IMR-90 (cell line): ENCODE measurements at regions of chr1 and their contacts with region 1.

Region 1: DNA sequence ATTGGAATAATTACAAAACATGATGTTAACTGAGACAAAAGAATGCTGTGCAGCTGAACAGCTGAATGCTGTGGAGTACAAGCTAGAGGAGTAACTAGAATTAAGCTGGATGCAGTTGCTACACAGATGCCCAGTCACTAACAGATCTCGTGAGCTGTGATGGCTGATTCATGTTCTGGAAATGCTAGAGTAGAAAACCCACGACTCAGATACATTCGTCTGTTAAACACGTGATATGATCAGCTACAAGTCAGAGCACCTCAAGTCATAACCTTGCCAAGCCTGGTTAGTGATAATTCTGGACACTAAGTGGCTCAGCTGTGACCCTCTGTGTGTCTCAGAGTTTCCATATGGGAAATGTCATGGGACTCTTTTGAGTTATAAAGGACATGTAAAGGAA is 89.7 kb upstream of the ESRRG start:
- DNase-seq: peak; percentile 88
- ATAC-seq: peak; percentile 83
- H3K4me3 ChIP-seq: no peak overlapping the region
- H3K27ac ChIP-seq: no peak overlapping the region
- H3K4me1 ChIP-seq: peaks cover 11% of the 10 kb centered on the region
- H3K27me3 ChIP-seq: no peaks in the 10 kb centered on the region
- CTCF ChIP-seq: no peak
- POLR2A ChIP-seq: no peak
- RAD21 ChIP-seq: no peak

Region 2: DNA sequence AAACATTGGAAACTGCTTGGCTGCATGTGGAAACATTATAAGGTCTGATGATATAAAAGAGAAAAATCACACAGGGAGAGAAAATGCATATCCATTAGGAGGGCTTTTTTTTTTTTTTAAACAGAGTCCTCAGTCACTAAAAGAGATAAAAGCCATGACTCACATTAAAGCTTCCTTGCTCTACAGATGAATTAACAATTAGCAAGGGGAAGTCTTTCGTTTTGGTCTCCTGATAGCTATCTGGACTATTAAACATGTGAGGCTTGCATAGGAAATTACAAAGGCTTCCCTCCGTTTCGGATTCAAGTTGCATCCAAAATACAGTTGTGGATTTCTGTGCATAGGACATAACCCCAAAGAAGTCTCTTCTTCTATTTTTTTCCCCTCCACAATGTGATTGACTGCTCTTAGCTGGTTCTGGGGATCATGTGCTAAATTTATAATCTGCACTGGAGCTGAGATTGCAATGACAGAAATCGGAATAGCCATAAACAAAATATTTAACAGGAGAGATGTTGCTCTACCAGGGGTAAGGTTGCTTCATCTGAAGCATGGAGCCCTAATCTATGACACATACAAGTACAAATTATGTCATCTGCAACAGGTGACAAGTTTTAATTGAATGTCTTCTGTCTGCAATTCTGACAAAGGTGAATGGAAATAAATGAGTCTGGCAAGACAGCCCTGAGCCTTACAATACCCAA is 236.6 kb before region 1 on chr1:
- CTCF ChIA-PET with region 1: no interaction called
- POLR2A ChIA-PET with region 1: no interaction called
- dilution Hi-C with region 1: no loop called
- in situ Hi-C with region 1: no loop called
- intact Hi-C with region 1: no loop called
- DNase-seq: peak; percentile 2
- ATAC-seq: no peak
- H3K4me3 ChIP-seq: no peak overlapping the region
- H3K27ac ChIP-seq: no peak overlapping the region
- H3K4me1 ChIP-seq: no peaks in the 10 kb centered on the region
- H3K27me3 ChIP-seq: no peaks in the 10 kb centered on the region
- CTCF ChIP-seq: no peak
- POLR2A ChIP-seq: no peak
- RAD21 ChIP-seq: no peak

Region 3: DNA sequence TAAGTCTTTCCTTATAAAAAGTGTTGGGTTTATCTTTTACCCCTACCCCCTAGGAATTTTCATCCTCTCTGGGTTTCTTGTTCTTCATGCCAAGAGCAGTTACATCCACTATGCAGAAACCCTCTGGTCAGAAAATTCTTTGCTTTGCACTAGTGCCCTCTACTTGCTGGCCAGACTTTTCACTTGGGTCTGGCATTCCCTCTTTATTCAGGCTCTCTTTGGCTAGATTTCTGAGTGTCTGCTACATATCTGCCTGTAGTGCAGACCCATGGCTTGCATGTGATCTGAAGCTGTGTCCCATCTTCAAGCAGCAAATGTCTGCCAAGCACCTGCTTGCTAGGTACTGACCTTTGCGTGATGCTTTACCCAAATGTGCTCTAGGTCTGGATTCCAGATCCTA is 580.9 kb after region 1 on chr1:
- CTCF ChIA-PET with region 1: no interaction called
- POLR2A ChIA-PET with region 1: no interaction called
- dilution Hi-C with region 1: no loop called
- in situ Hi-C with region 1: no loop called
- intact Hi-C with region 1: loop called (anchors 5 kb)
- DNase-seq: no peak
- ATAC-seq: peak; percentile 44; the same call in 1 of the 2 replicates
- H3K4me3 ChIP-seq: no peak overlapping the region
- H3K27ac ChIP-seq: no peak overlapping the region
- H3K4me1 ChIP-seq: no peaks in the 10 kb centered on the region
- H3K27me3 ChIP-seq: no peaks in the 10 kb centered on the region
- CTCF ChIP-seq: no peak
- POLR2A ChIP-seq: no peak
- RAD21 ChIP-seq: no peak